ENCODE measurements at regions of chr15 and their contacts with region 1.

Region 1: DNA sequence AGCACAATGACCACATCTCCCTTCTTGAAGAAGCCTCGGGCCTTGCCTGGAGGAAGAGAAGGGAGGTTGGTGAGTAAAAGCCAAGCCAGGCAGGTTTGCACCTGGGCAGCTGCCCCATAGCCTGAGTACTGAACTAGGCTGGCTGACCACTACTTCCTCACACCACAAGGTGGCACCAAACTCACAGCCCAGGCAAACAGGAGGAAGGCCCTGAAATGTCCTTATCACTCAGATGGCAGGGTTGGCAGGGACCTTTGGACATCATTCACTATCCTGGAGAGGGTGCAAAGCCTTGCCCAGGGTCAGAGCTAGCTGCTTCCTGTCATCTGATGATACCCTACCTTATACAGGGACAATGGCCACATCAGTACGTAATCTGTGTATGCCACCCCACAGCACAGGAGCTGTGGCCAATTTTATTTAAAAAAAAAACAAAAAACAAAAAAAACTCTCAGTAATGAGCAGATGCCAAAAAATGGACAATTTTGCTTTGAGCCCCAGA is 2.2 kb upstream of the GRAMD2A start:
- DNase-seq: peak; percentile 75
- ATAC-seq: peak; percentile 62

Region 2: DNA sequence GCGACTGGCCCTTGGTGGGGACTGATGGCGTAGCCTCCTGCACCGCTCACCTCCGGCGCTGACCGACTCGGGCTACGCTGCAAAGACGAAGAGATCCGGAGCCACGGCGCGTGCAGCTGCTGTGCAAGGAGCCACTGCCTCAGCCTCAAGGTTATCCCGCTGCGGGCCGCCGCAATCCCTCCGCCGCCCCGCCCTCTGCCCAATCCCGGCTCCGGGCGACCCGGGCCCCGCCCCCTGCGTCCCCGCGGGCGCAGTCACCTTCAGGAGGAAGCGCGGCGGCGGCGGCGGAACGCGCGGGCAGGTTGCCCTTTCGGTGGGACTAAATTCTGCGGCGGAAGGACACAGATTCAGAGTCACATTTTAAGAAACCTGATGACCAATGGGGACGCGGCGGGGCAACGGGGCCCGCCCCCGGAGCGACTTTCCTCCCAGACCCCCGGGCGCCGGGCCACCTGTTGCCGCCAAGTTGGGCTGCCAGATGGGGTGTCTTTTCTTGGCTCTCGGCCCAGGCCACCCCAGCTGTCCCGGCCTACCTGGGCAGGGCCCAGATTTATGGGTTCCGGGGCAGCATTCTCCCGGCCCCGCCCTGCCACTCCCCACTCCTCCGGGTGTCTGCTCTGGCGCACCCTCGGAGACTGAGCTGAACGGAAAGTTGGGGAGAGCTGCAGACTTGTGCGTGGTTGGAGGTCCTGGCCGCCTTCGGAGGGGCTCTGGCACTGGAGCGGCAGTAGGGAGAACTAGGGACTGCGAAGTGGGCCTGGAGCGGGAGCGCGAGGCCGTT is 31.5 kb after region 1 on chr15 and contains the start of gene PKM:
- intact Hi-C with region 1: loop called (anchors 2 kb)
- DNase-seq: peak; percentile 97
- ATAC-seq: peak; percentile 92
- total RNA-seq, gene PKM: 1,065 TPM

Region 3: GRCh38 chr15:72272213-72273002 is 72.6 kb after region 1 on chr15 and contains the start of gene PARP6:
- intact Hi-C with region 1: loop called (anchors 10 kb)
- DNase-seq: peak; percentile 99
- ATAC-seq: peak; percentile 99
- total RNA-seq, gene PARP6: 37.2 TPM

Measured in Right ventricle myocardium superior (tissue), 1 donor.